Calu3 (cell line): ENCODE measurements at regions of chr10 and their contacts with region 1.

Region 1: DNA sequence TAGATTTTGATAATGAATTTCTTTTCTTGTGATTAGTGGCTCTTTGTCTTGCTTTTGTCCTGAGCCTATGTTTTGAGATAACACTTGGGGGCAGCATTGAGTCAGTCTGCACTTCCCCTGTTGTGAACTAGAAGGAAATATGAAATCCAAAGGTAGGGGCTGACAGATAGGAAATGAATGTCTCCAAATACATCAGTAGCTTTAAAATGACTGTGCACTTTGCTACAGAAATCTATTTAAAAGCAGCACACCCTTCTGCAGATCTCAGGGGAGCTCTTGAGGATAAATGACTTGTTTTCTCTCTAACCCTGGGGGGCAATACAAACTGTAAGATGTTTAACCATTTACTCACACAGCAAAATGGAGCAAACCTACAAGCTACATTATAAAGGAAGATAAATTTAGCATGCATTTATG is 176.0 kb upstream of the MYO3A start:
- DNase-seq: peak; percentile 47
- H3K4me3 Mint-ChIP-seq: no peak overlapping the region
- H3K27ac Mint-ChIP-seq: no peak overlapping the region
- H3K4me1 Mint-ChIP-seq: no peaks in the 10 kb centered on the region
- H3K27me3 Mint-ChIP-seq: peaks cover 4% of the 10 kb centered on the region
- CTCF ChIP-seq: no peak

Region 2: GRCh38 chr10:25627606-25628005 is 130.4 kb before region 1 on chr10:
- CTCF ChIA-PET with region 1: no interaction called
- intact Hi-C with region 1: no loop called
- DNase-seq: no peak
- H3K4me3 Mint-ChIP-seq: no peak overlapping the region
- H3K27ac Mint-ChIP-seq: no peak overlapping the region
- H3K4me1 Mint-ChIP-seq: no peaks in the 10 kb centered on the region
- H3K27me3 Mint-ChIP-seq: peaks cover 15% of the 10 kb centered on the region
- CTCF ChIP-seq: no peak

Region 3: DNA sequence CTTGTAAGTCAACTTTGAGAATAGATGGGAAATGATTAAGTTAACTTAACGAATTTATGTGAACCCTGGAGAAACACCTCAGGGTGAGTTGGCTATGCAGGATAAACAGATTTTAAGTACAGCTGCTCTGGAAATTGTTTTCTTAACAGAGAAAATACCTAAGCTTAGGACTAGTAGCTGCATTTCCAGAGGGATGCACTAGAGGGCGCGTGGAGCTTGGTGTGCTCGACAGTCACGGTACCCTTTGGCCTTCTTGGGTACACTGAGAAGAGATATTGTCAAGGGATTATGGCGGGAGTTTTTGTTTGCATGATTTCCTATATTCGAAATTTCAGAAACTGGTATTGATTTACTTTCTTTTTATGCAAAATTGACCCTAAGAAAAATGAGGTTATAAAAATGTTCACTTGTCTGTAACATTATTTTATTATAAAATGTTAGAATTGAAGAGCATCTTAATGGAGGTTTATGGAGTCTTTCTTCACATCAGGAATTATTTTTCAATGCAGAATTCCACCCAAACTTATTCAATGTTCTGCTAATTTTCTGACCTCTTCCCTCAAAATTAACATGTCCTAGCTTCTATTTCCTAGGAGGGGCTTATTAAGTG is 117.6 kb after region 1 on chr10:
- CTCF ChIA-PET with region 1: interaction called, 3 read pairs
- intact Hi-C with region 1: loop called (anchors 5 kb)
- DNase-seq: peak; percentile 78
- H3K4me3 Mint-ChIP-seq: no peak overlapping the region
- H3K27ac Mint-ChIP-seq: no peak overlapping the region
- H3K4me1 Mint-ChIP-seq: no peaks in the 10 kb centered on the region
- H3K27me3 Mint-ChIP-seq: peaks cover 16% of the 10 kb centered on the region
- CTCF ChIP-seq: peak; percentile 82

Region 4: GRCh38 chr10:25934621-25935139 is 176.6 kb after region 1 on chr10:
- CTCF ChIA-PET with region 1: no interaction called
- intact Hi-C with region 1: loop called (anchors 10 kb)
- DNase-seq: peak; percentile 56
- H3K4me3 Mint-ChIP-seq: peak overlapping the region; percentile 84
- H3K27ac Mint-ChIP-seq: no peak overlapping the region
- H3K4me1 Mint-ChIP-seq: peaks cover 7% of the 10 kb centered on the region
- H3K27me3 Mint-ChIP-seq: peaks cover 38% of the 10 kb centered on the region
- CTCF ChIP-seq: peak; percentile 52

Region 5: DNA sequence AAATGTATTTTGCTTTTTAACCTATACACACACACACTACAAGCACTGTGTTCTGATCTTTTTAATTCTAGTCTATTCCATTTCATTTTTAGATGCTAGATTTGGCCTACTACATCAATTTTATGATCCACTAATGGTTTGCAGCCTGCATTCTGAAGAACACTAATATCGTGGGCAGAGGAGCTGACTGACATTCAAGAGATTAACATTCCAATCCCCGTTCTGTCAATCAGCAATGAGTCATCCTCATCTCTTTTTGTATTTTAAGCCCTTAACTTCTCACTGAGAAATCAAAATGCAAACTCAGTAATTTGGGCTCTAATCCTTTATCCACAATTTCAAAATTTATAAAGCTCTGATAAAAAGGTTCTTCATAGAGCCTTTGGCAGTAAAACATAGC is 411.4 kb after region 1 on chr10:
- CTCF ChIA-PET with region 1: no interaction called
- intact Hi-C with region 1: loop called (anchors 5 kb)
- DNase-seq: no peak
- H3K4me3 Mint-ChIP-seq: no peak overlapping the region
- H3K27ac Mint-ChIP-seq: no peak overlapping the region
- H3K4me1 Mint-ChIP-seq: no peaks in the 10 kb centered on the region
- H3K27me3 Mint-ChIP-seq: peaks cover 12% of the 10 kb centered on the region
- CTCF ChIP-seq: no peak

Region 6: DNA sequence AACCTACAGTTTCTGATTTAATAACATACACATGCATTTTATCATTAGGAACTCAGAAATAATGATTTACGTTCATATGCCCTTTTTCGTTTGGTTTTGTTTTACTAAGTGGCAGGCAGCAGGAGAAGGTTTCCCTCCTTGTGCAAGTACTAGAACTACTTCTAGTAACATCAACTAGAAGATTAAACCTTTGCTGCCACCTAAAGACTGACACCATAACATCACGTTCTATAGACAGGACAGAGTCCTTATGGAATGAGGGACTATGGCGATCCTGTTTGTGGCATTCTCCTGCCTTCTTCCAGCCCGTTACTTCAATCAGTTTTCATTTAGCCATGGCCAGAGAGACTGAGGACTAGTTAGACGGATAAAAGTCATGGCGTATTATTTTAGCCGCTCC is 511.7 kb after region 1 on chr10:
- CTCF ChIA-PET with region 1: interaction called, 3 read pairs
- intact Hi-C with region 1: loop called (anchors 1 kb)
- DNase-seq: peak; percentile 24
- H3K4me3 Mint-ChIP-seq: no peak overlapping the region
- H3K27ac Mint-ChIP-seq: no peak overlapping the region
- H3K4me1 Mint-ChIP-seq: no peaks in the 10 kb centered on the region
- H3K27me3 Mint-ChIP-seq: peaks cover 19% of the 10 kb centered on the region
- CTCF ChIP-seq: peak; percentile 31